ENCODE measurements at regions of chr1 and their contacts with region 1.

Region 1: DNA sequence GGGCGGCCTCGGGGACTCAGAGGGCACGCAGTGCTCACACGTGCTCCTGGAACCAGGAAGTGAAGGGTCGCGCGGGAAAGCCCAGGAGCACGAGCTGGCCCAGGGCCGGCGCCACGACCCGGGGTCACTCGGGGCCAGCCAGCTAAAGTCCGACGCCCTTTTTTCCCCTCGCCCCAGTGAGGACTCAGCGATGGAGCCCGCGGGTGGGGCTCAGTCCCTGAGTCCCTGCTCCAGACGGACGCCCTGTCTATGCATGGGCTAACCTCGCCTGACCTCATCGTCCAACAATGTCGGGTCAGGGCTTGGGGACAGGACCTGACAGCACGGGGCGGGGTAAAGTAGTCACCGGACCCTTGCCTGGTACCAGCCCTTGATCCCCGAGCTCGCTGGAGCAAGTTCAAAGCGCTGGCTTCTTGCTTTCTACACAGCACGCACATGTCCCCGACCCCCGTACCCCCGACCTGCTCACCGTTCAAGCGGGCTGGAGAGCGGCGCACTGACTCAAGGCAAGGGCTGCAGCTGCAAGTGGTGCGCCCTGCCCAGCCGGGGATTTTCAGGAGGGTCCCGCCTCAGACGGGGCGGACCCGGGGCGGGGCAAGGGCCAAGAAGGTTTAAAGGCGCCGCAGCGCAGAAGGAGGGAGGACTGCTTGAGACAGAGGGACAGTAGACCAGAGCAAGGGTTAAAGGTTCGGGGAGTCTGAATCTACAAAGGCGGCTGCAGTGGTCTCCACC is at the start of gene TAGLN2:
- DNase-seq: peak; percentile 76 to 95
- H3K4me3 ChIP-seq: peak within 1 kb of the TSS; percentile 74 to 83
- H3K27ac ChIP-seq: peak within 1 kb of the TSS; percentile 96 to 98
- H3K4me1 ChIP-seq: peaks cover 6 to 20% of the 10 kb centered on the region in 2 donors
- H3K27me3 ChIP-seq: no peaks in the 10 kb centered on the region
- CTCF ChIP-seq: no peak
- total RNA-seq, gene TAGLN2: 363 TPM

Region 2: GRCh38 chr1:158019171-158019868 is 1905.8 kb before region 1 on chr1:
- intact Hi-C with region 1: loop called (anchors 10 kb)
- DNase-seq: peak in 1 of 2 donors; percentile 89
- H3K4me3 ChIP-seq: peak overlapping the region; percentile 42 to 52
- H3K27ac ChIP-seq: peak overlapping the region; percentile 92 to 99
- H3K4me1 ChIP-seq: peaks cover 54 to 87% of the 10 kb centered on the region in 2 donors
- H3K27me3 ChIP-seq: no peaks in the 10 kb centered on the region
- CTCF ChIP-seq: no peak

Region 3: DNA sequence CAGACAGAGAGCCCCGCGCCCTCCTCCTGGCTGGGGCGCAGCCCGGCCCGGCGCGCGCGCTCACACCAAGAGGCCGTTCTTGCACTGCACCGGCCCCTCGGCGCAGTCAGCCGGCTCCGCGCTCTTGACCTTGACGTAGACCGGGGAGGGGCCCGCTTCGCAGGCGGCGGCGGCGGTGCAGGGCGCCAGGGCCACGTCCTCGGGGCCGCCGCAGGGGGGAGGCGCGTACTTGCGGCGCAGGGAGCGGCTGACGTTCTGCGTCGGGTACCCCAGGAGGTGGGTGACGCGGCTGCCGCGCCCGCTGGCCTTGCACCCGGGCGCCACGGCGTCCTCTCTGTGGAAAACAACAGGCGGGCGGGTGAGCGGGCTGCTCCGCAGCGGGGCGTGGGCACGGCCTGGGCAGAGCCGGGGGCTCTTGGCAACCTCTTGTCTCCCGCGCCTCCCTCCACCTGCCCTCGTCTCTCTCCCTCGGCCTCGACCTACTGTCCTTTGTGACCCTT is 70.4 kb before region 1 on chr1:
- intact Hi-C with region 1: loop called (anchors 1 kb)
- DNase-seq: peak; percentile 32 to 92
- H3K4me3 ChIP-seq: peak overlapping the region; percentile 78 to 92
- H3K27ac ChIP-seq: peak overlapping the region; percentile 98
- H3K4me1 ChIP-seq: peaks cover 0 to 8% of the 10 kb centered on the region in 2 donors
- H3K27me3 ChIP-seq: no peaks in the 10 kb centered on the region
- CTCF ChIP-seq: peak in 1 of 3 experiments; percentile 22

Region 4: GRCh38 chr1:160261893-160262794 is 337.0 kb after region 1 on chr1 and contains the start of gene DCAF8:
- intact Hi-C with region 1: loop called (anchors 5 kb)
- DNase-seq: peak; percentile 90 to 99
- H3K4me3 ChIP-seq: peak within 1 kb of the TSS; percentile 85 to 98
- H3K27ac ChIP-seq: peak within 1 kb of the TSS; percentile 98
- H3K4me1 ChIP-seq: peaks cover 0 to 24% of the 10 kb centered on the region in 2 donors
- H3K27me3 ChIP-seq: no peaks in the 10 kb centered on the region
- CTCF ChIP-seq: no peak
- total RNA-seq, gene DCAF8: 68.9 TPM

Region 5: GRCh38 chr1:160806109-160806665 is 881.0 kb after region 1 on chr1:
- intact Hi-C with region 1: no loop called
- DNase-seq: no peak
- H3K4me3 ChIP-seq: no peak overlapping the region
- H3K27ac ChIP-seq: no peak overlapping the region
- H3K4me1 ChIP-seq: no peaks in the 10 kb centered on the region
- H3K27me3 ChIP-seq: no peaks in the 10 kb centered on the region
- CTCF ChIP-seq: no peak

Region 6: GRCh38 chr1:161399257-161399998 is 1474.3 kb after region 1 on chr1:
- intact Hi-C with region 1: loop called (anchors 10 kb)
- DNase-seq: peak; percentile 69 to 95
- H3K4me3 ChIP-seq: peak overlapping the region; percentile 78 to 86
- H3K27ac ChIP-seq: peak overlapping the region; percentile 100
- H3K4me1 ChIP-seq: peaks cover 0 to 8% of the 10 kb centered on the region in 2 donors
- H3K27me3 ChIP-seq: no peaks in the 10 kb centered on the region
- CTCF ChIP-seq: peak in 2 of 3 experiments; percentile 34 to 35

Measured in ascending aorta (tissue), 2 donors.